BJ (cell line): ENCODE measurements at regions of chr5 and their contacts with region 1.

Region 1: GRCh38 chr5:56288873-56289601 is 55.9 kb upstream of the ANKRD55 start:
- DNase-seq: no peak
- H3K4me3 ChIP-seq: no peak overlapping the region
- H3K27me3 ChIP-seq: no peaks in the 10 kb centered on the region
- CTCF ChIP-seq: no peak

Region 2: GRCh38 chr5:56303515-56303914 is 14.5 kb after region 1 on chr5:
- CTCF ChIA-PET with region 1: interaction called, 25 read pairs
- POLR2A ChIA-PET with region 1: no interaction called
- DNase-seq: no peak
- H3K4me3 ChIP-seq: no peak overlapping the region
- H3K27me3 ChIP-seq: no peaks in the 10 kb centered on the region
- CTCF ChIP-seq: no peak